ENCODE measurements at regions of chr7 and their contacts with region 1.

Region 1: GRCh38 chr7:134690016-134690415 is 43.4 kb downstream of the BPGM start:
- DNase-seq: no peak
- ATAC-seq: no peak
- H3K4me3 ChIP-seq: no peak overlapping the region
- H3K27ac ChIP-seq: no peak overlapping the region
- H3K4me1 ChIP-seq: no peaks in the 10 kb centered on the region
- H3K27me3 ChIP-seq: peaks cover 4% of the 10 kb centered on the region; the same call in 1 of the 2 replicates
- CTCF ChIP-seq: peak; percentile 20 to 25 (median 24); a peak in 2 of 6 replicates
- POLR2A ChIP-seq: no peak
- RAD21 ChIP-seq: peak; percentile 53

Region 2: GRCh38 chr7:134660961-134661376 is 29.0 kb before region 1 on chr7:
- CTCF ChIA-PET with region 1: no interaction called
- POLR2A ChIA-PET with region 1: no interaction called
- RAD21 ChIA-PET with region 1: no interaction called
- intact Hi-C with region 1: no loop called
- DNase-seq: no peak
- ATAC-seq: no peak
- H3K4me3 ChIP-seq: no peak overlapping the region
- H3K27ac ChIP-seq: no peak overlapping the region
- H3K4me1 ChIP-seq: no peaks in the 10 kb centered on the region
- H3K27me3 ChIP-seq: no peaks in the 10 kb centered on the region
- CTCF ChIP-seq: no peak
- POLR2A ChIP-seq: no peak
- RAD21 ChIP-seq: no peak

Region 3: GRCh38 chr7:134943764-134944400 is 253.9 kb after region 1 on chr7:
- CTCF ChIA-PET with region 1: interaction called, 11 read pairs
- POLR2A ChIA-PET with region 1: no interaction called
- RAD21 ChIA-PET with region 1: no interaction called
- intact Hi-C with region 1: no loop called
- DNase-seq: peak; percentile 19
- ATAC-seq: peak; percentile 93
- H3K4me3 ChIP-seq: no peak overlapping the region
- H3K27ac ChIP-seq: no peak overlapping the region
- H3K4me1 ChIP-seq: no peaks in the 10 kb centered on the region
- H3K27me3 ChIP-seq: no peaks in the 10 kb centered on the region
- CTCF ChIP-seq: peak; percentile 40 to 78 (median 62); a peak in 5 of 6 replicates
- POLR2A ChIP-seq: no peak
- RAD21 ChIP-seq: peak; percentile 83

Region 4: GRCh38 chr7:134954197-134955082 is 264.4 kb after region 1 on chr7:
- CTCF ChIA-PET with region 1: interaction called, 12 read pairs
- POLR2A ChIA-PET with region 1: no interaction called
- RAD21 ChIA-PET with region 1: no interaction called
- intact Hi-C with region 1: loop called (anchors 2 kb)
- DNase-seq: peak; percentile 12
- ATAC-seq: no peak
- H3K4me3 ChIP-seq: no peak overlapping the region
- H3K27ac ChIP-seq: no peak overlapping the region
- H3K4me1 ChIP-seq: no peaks in the 10 kb centered on the region
- H3K27me3 ChIP-seq: no peaks in the 10 kb centered on the region
- CTCF ChIP-seq: peak; percentile 36 to 74 (median 66); a peak in 5 of 6 replicates
- POLR2A ChIP-seq: no peak
- RAD21 ChIP-seq: peak; percentile 77

Region 5: GRCh38 chr7:135170274-135170997 is 480.4 kb after region 1 on chr7 and contains the start of gene CYREN:
- CTCF ChIA-PET with region 1: interaction called, 8 read pairs
- POLR2A ChIA-PET with region 1: no interaction called
- RAD21 ChIA-PET with region 1: interaction called in 1 of 2 experiments, 3 read pairs
- intact Hi-C with region 1: loop called (anchors 10 kb)
- DNase-seq: peak; percentile 88
- ATAC-seq: peak; percentile 88
- H3K4me3 ChIP-seq: peak within 1 kb of the TSS; percentile 81 to 83
- H3K27ac ChIP-seq: peak within 1 kb of the TSS; percentile 92
- H3K4me1 ChIP-seq: peaks cover 0 to 18% of the 10 kb centered on the region in 2 experiments; a peak in 2 of 4 replicates
- H3K27me3 ChIP-seq: no peaks in the 10 kb centered on the region
- CTCF ChIP-seq: peak; percentile 45 to 90 (median 52)
- POLR2A ChIP-seq: peak; percentile 36
- RAD21 ChIP-seq: peak; percentile 84
- total RNA-seq, gene CYREN: 54.5 TPM

Region 6: DNA sequence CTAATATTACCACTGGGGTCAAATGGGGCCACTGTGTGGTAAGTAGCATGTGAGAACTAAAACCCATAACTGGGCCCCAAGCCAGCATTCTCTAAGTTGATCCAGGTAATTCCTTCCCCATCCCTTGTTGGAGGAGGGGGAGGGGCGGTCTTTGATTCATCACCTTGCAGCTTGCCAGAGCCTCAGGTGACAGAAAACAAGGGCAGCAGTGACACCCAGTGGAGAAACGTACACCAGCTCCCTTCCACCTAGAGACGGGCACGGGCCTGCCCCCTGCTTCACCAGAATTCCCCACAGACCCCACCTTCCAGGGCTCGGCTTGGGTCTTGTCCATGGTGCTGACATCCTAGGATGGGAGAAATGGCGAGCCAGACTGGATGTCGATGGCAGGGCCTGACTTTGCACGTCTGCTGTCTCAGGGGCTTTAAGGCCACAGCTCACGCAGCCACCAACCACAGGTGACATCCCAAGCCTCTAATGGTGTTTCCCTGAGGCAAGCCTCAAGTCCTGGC is 645.7 kb after region 1 on chr7:
- CTCF ChIA-PET with region 1: interaction called, 6 read pairs
- POLR2A ChIA-PET with region 1: no interaction called
- RAD21 ChIA-PET with region 1: no interaction called
- intact Hi-C with region 1: loop called (anchors 10 kb)
- DNase-seq: peak; percentile 66
- ATAC-seq: peak; percentile 99
- H3K4me3 ChIP-seq: no peak overlapping the region
- H3K27ac ChIP-seq: no peak overlapping the region
- H3K4me1 ChIP-seq: no peaks in the 10 kb centered on the region
- H3K27me3 ChIP-seq: no peaks in the 10 kb centered on the region
- CTCF ChIP-seq: peak; percentile 65 to 96 (median 71)
- POLR2A ChIP-seq: no peak
- RAD21 ChIP-seq: peak; percentile 91

Measured in HCT116 (cell line).